Adrenal gland (tissue), 19 donors: ENCODE measurements at regions of chrX and their contacts with region 1.

Region 1: GRCh38 chrX:151151665-151152267 is 24.6 kb upstream of the GPR50 start:
- DNase-seq: peak; percentile 15 to 52 (median 28)
- H3K4me3 ChIP-seq: no peak overlapping the region
- H3K27ac ChIP-seq: no peak overlapping the region
- H3K4me1 ChIP-seq: no peaks in the 10 kb centered on the region
- H3K27me3 ChIP-seq: peaks cover 4% of the 10 kb centered on the region
- CTCF ChIP-seq: peak; percentile 59 to 88 (median 78)
- POLR2A ChIP-seq: no peak

Region 2: DNA sequence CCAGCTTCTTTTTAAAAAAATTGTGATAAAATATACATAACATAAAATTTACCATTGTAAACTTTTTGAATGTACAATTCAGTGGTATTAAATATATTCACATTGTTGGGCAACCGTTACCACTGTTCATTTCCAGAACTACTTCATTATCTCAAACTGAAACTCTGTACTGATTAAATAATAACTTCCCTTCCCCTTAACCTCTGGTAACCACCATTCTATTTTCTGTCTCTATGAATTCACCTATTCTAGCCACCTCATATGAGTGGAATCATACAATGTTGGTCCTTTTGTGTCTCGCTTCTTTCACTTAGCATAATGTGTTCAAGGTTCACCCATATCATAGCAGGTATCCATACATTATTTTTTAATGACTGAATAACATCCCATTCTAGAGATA is 32.9 kb after region 1 on chrX:
- intact Hi-C with region 1: no loop called
- DNase-seq: no peak
- H3K4me3 ChIP-seq: no peak overlapping the region
- H3K27ac ChIP-seq: no peak overlapping the region
- H3K4me1 ChIP-seq: no peaks in the 10 kb centered on the region
- H3K27me3 ChIP-seq: peaks cover 23% of the 10 kb centered on the region
- CTCF ChIP-seq: no peak
- POLR2A ChIP-seq: no peak

Region 3: DNA sequence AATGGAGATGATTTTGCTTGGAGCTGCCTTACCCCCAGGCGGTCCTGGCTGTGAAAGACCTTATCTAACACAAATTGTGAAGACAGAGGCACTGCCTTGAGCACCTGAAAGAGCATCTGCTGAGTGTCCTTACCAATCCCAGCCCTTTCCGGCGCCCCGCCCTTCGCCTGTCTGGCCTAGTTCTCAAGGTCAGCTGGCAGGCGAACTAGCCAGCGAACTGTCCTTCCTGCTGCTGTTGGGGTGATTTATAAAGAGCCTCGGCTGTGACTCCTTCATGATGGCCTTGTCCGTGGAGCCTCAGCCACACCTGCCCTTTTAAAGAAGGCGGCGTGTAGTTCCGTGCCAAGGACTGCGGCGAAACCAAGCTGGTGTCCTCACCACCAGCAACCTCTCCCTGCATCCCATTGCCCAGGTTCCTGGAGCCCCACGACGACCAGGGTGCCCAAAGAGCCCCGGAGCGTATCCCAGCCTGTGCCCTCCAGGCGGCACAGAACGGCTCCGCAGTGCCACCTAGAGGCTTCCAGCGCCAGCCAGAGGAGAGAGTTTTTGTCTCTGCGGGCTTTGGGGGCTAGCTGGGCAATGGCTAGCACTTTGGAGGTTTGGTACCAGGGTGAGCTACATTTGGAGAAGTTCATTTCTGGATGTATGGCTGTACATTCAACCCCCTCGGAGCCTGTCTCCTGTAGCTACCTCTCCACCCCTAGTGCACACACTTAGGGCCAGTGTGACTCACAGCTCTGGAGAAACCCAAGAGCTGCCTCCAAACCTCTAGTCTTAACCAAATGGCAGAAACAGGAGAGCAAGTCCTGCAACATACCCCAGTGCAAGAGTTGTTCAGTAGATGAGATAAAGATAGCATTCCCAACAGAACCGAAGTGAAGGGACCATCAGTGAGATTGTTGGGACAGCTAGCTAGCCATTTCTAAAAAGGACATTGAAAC is 208.4 kb after region 1 on chrX:
- intact Hi-C with region 1: loop called in 1 of 2 experiments (anchors 5 kb)
- DNase-seq: peak; percentile 40 to 77 (median 72)
- H3K4me3 ChIP-seq: no peak overlapping the region
- H3K27ac ChIP-seq: no peak overlapping the region
- H3K4me1 ChIP-seq: peaks cover 0 to 12% of the 10 kb centered on the region in 2 donors
- H3K27me3 ChIP-seq: peaks cover 9% of the 10 kb centered on the region
- CTCF ChIP-seq: peak in 5 of 6 experiments; percentile 35 to 54 (median 39)
- POLR2A ChIP-seq: no peak

Region 4: GRCh38 chrX:151680805-151681204 is 529.0 kb after region 1 on chrX:
- intact Hi-C with region 1: loop called in 1 of 2 experiments (anchors 5 kb)
- DNase-seq: peak; percentile 51 to 84 (median 62)
- H3K4me3 ChIP-seq: no peak overlapping the region
- H3K27ac ChIP-seq: no peak overlapping the region
- H3K4me1 ChIP-seq: no peaks in the 10 kb centered on the region
- H3K27me3 ChIP-seq: peaks cover 8% of the 10 kb centered on the region
- CTCF ChIP-seq: peak; percentile 59 to 84 (median 68)
- POLR2A ChIP-seq: no peak